Body of pancreas (tissue), 4 donors: ENCODE measurements at regions of chr3 and their contacts with region 1.

Region 1: DNA sequence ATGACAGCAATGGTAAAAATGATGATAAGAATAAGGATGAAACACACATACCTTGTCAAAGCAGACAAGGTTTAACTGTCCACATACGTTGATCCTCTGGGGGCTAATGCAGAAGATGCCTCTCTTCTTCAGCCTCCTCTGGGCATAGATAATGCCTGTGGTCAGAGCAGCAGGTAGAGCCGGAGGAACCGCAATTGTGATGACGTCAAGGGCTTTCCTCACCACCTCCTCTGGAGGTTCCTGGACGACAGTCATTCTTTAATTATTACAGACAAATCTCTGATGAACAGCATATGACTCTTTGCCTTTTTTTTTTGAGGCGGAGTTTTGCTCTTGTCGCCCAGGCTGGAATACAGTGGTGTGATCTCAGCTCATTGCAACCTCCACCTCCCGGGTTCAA is 86.3 kb upstream of the ATP13A5 start:
- DNase-seq: no peak
- ATAC-seq: no peak
- H3K4me3 ChIP-seq: no peak overlapping the region
- H3K27ac ChIP-seq: no peak overlapping the region
- H3K4me1 ChIP-seq: no peaks in the 10 kb centered on the region
- H3K27me3 ChIP-seq: no peaks in the 10 kb centered on the region
- CTCF ChIP-seq: no peak
- POLR2A ChIP-seq: no peak

Region 2: DNA sequence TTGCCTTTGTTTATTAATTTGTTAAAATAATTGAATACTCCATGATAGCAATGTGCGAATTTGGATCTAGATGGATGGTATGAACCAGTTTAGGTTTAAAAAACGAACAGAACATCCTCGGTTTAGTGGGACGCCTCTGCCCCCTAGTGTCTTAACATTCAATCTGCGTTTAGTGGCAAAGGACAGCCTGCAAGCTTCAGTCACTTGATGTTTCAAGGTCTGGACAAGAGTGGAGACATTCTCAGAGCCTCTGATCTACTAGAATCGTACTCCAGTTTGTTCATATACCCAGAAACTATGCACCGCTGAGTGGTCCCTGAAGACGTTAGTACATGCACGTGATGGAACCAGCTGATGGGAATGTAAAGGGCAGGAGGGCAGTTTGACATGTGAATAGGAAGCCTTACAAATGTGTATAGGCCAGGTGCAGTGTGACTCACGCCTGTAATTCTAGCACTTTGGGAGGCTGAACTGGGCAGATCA is 107.6 kb after region 1 on chr3:
- intact Hi-C with region 1: loop called (anchors 5 kb)
- DNase-seq: peak; percentile 65 to 74 (median 70)
- ATAC-seq: peak; percentile 81
- H3K4me3 ChIP-seq: no peak overlapping the region
- H3K27ac ChIP-seq: no peak overlapping the region
- H3K4me1 ChIP-seq: no peaks in the 10 kb centered on the region
- H3K27me3 ChIP-seq: no peaks in the 10 kb centered on the region
- CTCF ChIP-seq: peak; percentile 59 to 85 (median 79)
- POLR2A ChIP-seq: no peak